IMR-90 (cell line): ENCODE measurements at regions of chr22 and their contacts with region 1.

Region 1: DNA sequence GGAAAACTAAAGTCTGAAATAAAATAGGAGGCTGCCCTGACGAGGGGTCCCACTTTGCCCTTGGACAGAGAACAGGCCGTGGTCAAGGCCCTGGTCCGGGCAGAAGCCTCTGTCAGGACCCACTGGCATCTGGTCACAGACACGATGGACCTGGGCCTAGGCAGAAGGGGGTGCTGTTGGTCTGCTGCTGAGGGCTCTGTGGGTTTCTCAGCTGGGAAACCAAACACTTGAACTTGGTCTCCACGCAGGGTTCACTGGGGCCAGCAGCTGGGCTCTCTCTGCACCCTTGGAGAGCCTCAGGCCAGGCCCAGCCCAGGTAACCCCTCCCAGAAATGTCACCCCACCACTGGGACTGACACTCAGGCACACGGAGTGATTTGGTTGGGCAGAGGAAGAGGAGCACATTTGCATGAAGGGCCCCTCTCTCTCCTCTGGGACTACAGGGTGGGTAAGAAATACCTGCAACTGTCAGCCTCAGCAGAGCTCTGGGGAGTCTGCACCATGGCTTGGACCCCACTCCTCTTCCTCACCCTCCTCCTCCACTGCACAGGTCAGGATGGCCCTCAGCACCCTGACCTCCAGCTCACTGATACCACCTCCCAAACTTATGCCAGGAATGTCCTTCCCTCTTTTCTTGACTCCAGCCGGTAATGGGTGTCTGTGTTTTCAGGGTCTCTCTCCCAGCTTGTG is 48.1 kb upstream of the TOP3B start:
- DNase-seq: peak; percentile 50
- ATAC-seq: peak; percentile 96
- H3K4me3 ChIP-seq: no peak overlapping the region
- H3K27ac ChIP-seq: no peak overlapping the region
- H3K4me1 ChIP-seq: no peaks in the 10 kb centered on the region; the same call in 1 of the 2 replicates
- H3K27me3 ChIP-seq: no peaks in the 10 kb centered on the region; the same call in 1 of the 2 replicates
- CTCF ChIP-seq: peak; percentile 67
- POLR2A ChIP-seq: no peak
- RAD21 ChIP-seq: peak; percentile 76

Region 2: GRCh38 chr22:22156716-22157347 is 126.2 kb after region 1 on chr22:
- CTCF ChIA-PET with region 1: no interaction called
- POLR2A ChIA-PET with region 1: no interaction called
- dilution Hi-C with region 1: no loop called
- in situ Hi-C with region 1: no loop called
- intact Hi-C with region 1: loop called (anchors 10 kb)
- DNase-seq: peak; percentile 73
- ATAC-seq: peak; percentile 89
- H3K4me3 ChIP-seq: no peak overlapping the region
- H3K27ac ChIP-seq: no peak overlapping the region
- H3K4me1 ChIP-seq: no peaks in the 10 kb centered on the region
- H3K27me3 ChIP-seq: peaks cover 21% of the 10 kb centered on the region
- CTCF ChIP-seq: peak; percentile 64
- POLR2A ChIP-seq: no peak
- RAD21 ChIP-seq: peak; percentile 53

Region 3: DNA sequence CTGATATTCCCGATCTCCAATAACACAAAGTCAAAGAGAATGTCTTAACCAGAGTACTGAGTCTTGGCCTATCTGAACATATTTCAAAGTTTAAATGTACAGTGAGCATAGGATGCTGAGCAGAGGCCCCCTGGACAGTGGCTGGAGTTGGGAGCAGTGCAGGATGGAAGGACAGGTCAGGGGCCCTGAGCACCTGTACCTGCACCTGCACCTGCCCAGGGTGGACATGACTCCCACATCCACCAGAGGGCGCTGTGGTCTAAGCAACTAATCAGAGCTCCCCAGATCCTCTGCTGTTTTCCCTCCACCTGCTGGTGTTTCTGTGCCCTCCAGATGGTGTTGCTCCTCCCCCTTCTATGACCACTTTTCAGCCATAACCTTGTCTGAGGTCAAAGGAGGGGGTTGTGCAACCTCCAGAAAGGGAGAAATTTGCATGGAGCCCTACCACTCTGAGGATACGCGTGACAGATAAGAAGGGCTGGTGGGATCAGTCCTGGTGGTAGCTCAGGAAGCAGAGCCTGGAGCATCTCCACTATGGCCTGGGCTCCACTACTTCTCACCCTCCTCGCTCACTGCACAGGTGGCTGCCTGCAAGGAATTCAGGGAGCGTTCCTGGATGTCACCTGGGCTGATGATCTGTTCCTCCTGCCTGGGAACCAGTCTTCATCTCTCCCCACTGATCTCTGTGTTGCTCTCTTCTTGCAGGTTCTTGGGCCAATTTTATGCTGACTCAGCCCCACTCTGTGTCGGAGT is 164.8 kb after region 1 on chr22:
- CTCF ChIA-PET with region 1: no interaction called
- POLR2A ChIA-PET with region 1: no interaction called
- dilution Hi-C with region 1: no loop called
- in situ Hi-C with region 1: no loop called
- intact Hi-C with region 1: loop called (anchors 1 kb)
- DNase-seq: peak; percentile 37
- ATAC-seq: peak; percentile 24; the same call in 1 of the 2 replicates
- H3K4me3 ChIP-seq: no peak overlapping the region
- H3K27ac ChIP-seq: no peak overlapping the region
- H3K4me1 ChIP-seq: no peaks in the 10 kb centered on the region
- H3K27me3 ChIP-seq: peaks cover 33% of the 10 kb centered on the region
- CTCF ChIP-seq: peak; percentile 58
- POLR2A ChIP-seq: no peak
- RAD21 ChIP-seq: peak; percentile 59